ENCODE measurements at regions of chr14 and their contacts with region 1.

Region 1: GRCh38 chr14:102316743-102317563 is 2.6 kb upstream of the ZNF839 start:
- DNase-seq: peak; percentile 91 to 99 (median 96)

Region 2: GRCh38 chr14:102235275-102235897 is 81.6 kb before region 1 on chr14:
- intact Hi-C with region 1: loop called (anchors 5 kb)
- DNase-seq: peak; percentile 35 to 92 (median 74)

Region 3: DNA sequence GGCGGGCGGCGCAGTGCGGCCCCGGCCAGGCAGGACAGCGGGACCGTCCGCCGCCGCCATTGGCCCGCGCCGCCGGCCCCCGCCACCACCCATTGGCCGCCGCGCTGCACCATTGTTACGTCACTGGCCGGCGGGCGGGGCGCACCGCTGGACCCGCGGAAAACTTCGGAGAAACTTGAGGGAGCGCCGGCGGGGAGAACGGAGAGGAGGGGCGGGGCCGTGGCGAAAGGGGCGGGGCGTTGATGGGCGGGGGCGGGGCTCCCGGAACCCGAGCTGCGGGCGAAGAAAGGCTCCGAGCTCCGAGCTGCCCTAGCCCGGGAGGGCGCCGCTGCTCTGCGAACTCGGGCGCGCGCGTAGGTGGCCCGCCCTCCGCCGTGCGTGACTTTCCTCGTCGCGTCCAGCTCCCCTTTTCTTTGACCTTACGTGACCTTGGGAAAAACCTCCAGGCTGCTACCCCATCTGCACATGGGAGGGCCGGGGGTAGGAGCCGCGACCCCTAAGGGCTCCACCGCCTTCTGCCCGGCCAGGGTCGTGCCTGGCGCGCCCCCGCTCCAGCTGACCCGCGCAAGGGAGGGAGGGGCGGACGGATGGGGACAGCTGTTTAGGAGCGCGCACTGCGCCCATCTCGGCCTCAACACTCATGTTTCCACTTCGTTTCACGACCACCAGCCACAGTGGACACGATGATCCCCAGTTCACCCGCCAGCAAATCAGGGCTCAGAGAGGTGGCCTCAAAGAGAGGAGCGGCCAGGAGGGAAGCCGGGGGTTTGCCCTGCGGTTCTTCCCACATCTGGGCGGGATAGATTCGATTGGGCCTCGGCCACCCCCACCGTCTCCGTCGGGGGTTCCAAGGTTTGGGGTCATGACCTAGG is 193.0 kb after region 1 on chr14 and contains the start of gene ANKRD9:
- intact Hi-C with region 1: loop called (anchors 10 kb)
- DNase-seq: peak; percentile 71 to 95 (median 88)

Measured in head of caudate nucleus (tissue), 42 donors.